H1 (cell line): ENCODE measurements at regions of chr1 and their contacts with region 1.

Region 1: DNA sequence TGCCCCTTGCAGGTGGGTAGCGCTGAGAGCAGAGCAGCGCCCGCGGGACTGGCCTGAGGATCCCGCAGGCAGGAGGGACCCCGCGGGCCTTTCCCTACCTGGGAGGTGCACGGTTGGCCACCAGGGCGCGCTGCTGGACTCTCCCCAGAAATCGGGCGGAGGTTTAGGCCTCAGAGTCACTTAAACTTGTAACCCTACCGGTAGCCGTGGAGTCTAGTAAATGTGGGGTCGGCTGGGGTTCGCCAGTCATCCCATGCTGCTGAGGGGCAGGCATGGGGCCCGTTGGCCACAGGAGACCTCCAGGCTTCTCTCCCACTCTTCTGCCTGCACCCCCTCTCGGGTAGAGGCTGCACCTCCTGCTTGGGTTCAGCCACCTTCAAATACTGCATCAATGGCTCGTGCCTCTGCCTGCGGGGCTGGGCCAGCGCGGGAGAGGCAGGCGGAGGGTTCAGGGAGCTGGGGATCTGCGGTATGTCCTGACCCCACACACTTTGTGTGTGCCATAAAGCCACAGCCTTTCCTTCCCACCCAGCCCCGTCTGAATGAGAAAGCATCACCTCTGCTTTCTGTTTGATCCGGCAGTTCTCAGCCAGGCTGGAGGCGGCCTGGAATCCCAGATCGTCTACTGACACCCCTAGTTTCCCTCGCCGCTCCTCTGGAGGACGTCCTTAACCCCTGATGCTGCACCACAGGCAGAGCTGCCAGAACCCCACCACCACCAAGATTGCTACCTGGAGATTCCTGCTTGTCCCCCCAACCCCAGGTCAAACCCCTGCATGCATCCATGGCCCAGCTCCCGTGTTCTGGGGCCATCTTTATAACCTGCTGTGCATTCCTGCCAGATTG is 12.3 kb upstream of the GSTM4 start:
- DNase-seq: peak; percentile 74 to 99
- H3K4me3 ChIP-seq: no peak overlapping the region
- H3K27ac ChIP-seq: no peak overlapping the region
- H3K4me1 ChIP-seq: no peaks in the 10 kb centered on the region; a peak in 1 of 7 replicates
- H3K27me3 ChIP-seq: no peaks in the 10 kb centered on the region; a peak in 2 of 7 replicates
- CTCF ChIP-seq: peak; percentile 83 to 98 (median 92)
- EP300 ChIP-seq: 0 out of 3 replicates have a peak, but pooled peaks of 1 of the 2 experiments have one; percentile 12
- POLR2A ChIP-seq: no peak
- RAD21 ChIP-seq: peak; percentile 89 to 92

Region 2: DNA sequence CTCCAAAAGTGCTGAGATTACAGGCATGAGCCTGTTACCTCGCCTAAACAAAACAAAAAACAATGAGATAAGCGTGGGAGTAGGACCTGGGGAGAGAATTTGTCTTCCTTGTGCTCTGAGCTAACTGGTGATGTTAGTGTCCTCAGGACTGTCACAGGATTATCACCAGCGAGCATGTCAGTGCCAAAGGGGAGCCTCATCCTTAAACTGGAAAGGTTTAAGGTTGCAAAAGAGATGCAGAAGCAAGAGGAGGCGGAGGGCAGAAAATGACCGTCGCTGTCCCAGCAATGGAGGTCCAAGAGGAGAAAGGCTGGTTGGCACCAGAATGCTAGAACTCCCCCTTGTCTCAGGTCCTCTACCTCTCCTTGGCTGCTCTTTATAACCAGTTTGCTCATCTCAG is 173.4 kb before region 1 on chr1:
- CTCF ChIA-PET with region 1: no interaction called
- POLR2A ChIA-PET with region 1: no interaction called
- DNase-seq: no peak
- H3K4me3 ChIP-seq: no peak overlapping the region
- H3K27ac ChIP-seq: no peak overlapping the region
- H3K4me1 ChIP-seq: peaks cover 0 to 8% (median 1%) of the 10 kb centered on the region in 4 experiments; a peak in 5 of 7 replicates
- H3K27me3 ChIP-seq: peaks cover 3 to 36% (median 29%) of the 10 kb centered on the region in 4 experiments
- CTCF ChIP-seq: no peak
- EP300 ChIP-seq: no peak
- POLR2A ChIP-seq: no peak
- RAD21 ChIP-seq: no peak

Region 3: GRCh38 chr1:109532365-109533136 is 111.1 kb before region 1 on chr1:
- CTCF ChIA-PET with region 1: interaction called, 17 read pairs
- POLR2A ChIA-PET with region 1: no interaction called
- DNase-seq: peak in 1 of 2 experiments; percentile 97
- H3K4me3 ChIP-seq: peak overlapping the region in 2 of 4 experiments; percentile 10 to 40; a peak in 1 of 8 replicates
- H3K27ac ChIP-seq: no peak overlapping the region
- H3K4me1 ChIP-seq: peaks cover 0 to 3% (median 1%) of the 10 kb centered on the region in 4 experiments; a peak in 4 of 7 replicates
- H3K27me3 ChIP-seq: no peaks in the 10 kb centered on the region
- CTCF ChIP-seq: peak; percentile 92 to 98 (median 96)
- EP300 ChIP-seq: no peak
- POLR2A ChIP-seq: no peak
- RAD21 ChIP-seq: peak; percentile 93

Region 4: GRCh38 chr1:109598655-109599054 is 45.0 kb before region 1 on chr1:
- CTCF ChIA-PET with region 1: interaction called, 25 read pairs
- POLR2A ChIA-PET with region 1: no interaction called
- DNase-seq: no peak
- H3K4me3 ChIP-seq: no peak overlapping the region
- H3K27ac ChIP-seq: no peak overlapping the region
- H3K4me1 ChIP-seq: no peaks in the 10 kb centered on the region
- H3K27me3 ChIP-seq: no peaks in the 10 kb centered on the region
- CTCF ChIP-seq: peak; percentile 36 to 64 (median 61)
- EP300 ChIP-seq: no peak
- POLR2A ChIP-seq: no peak
- RAD21 ChIP-seq: peak; percentile 57 to 67

Region 5: GRCh38 chr1:109655601-109656519 is 12.3 kb after region 1 on chr1 and contains the start of gene GSTM4:
- CTCF ChIA-PET with region 1: interaction called, 185 read pairs
- POLR2A ChIA-PET with region 1: interaction called, 6 read pairs
- DNase-seq: peak; percentile 44 to 86
- H3K4me3 ChIP-seq: peak within 1 kb of the TSS; percentile 59 to 74 (median 66)
- H3K27ac ChIP-seq: no peak within 1 kb of the TSS
- H3K4me1 ChIP-seq: 0 out of 7 replicates have a peak, but pooled peaks cover 0 to 3% (median 0%) of the 10 kb centered on the region in 4 experiments
- H3K27me3 ChIP-seq: peaks cover 0 to 5% (median 4%) of the 10 kb centered on the region in 4 experiments; a peak in 6 of 7 replicates
- CTCF ChIP-seq: no peak; a peak in 1 of 4 replicates
- EP300 ChIP-seq: 0 out of 3 replicates have a peak, but pooled peaks of 1 of the 2 experiments have one; percentile 22
- POLR2A ChIP-seq: peak in 1 of 2 experiments; percentile 32; a peak in 1 of 3 replicates
- RAD21 ChIP-seq: no peak; a peak in 1 of 4 replicates
- total RNA-seq, gene GSTM4: 11.3 and 18.7 TPM in 2 replicates

Region 6: DNA sequence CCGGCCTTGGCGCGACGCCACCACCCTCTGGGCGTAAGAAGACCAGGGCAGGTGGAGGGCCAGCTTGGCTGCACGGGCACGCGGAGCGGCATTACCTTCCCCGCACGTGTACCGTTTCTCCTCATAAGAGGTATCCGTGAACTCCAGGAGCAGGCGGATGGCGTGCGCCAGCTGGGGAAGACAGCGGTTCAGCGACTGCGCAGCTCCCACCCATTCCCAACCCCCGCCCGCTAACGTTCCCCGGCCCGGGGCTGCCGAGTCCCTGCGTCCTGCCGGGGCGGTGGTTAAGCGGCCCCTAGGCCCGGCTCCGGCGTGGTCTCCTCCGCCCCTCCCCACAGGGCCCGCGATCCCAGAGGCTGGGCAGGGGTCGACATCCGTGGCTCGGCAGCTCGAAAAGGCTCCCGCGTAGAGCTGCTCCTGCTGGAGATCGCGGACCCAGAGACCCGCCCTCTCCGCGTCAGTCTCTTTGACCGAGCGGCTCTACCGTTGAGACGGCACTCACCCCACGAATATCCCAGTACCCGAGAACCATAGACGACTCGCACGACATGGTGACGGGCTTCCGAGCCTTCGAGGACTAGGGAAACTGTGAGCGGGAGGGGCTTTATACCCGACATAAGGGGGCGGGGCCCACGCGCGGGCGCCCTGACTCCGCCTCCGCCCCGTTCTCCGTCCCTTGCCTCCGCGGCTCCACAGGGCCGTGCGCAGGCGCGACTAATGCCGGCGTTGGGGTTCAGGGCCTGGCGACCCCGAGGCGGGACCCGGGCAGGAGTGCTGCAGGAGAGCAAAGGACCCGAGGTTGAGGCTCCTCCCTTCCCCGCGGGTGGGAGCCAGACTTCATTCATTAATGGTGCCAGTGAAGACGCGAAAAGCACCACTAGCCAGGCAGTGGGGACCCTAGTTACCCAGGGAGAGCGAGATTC is 96.4 kb after region 1 on chr1:
- CTCF ChIA-PET with region 1: interaction called, 18 read pairs
- POLR2A ChIA-PET with region 1: no interaction called
- DNase-seq: peak in 1 of 2 experiments; percentile 89
- H3K4me3 ChIP-seq: peak overlapping the region; percentile 65 to 79 (median 70)
- H3K27ac ChIP-seq: no peak overlapping the region; the same call in 1 of the 2 replicates
- H3K4me1 ChIP-seq: peaks cover 0 to 8% (median 5%) of the 10 kb centered on the region in 4 experiments; a peak in 5 of 7 replicates
- H3K27me3 ChIP-seq: peaks cover 5 to 28% (median 27%) of the 10 kb centered on the region in 4 experiments
- CTCF ChIP-seq: no peak
- EP300 ChIP-seq: 0 out of 3 replicates have a peak, but pooled peaks of 1 of the 2 experiments have one; percentile 14
- POLR2A ChIP-seq: peak; percentile 59 to 62; a peak in 2 of 3 replicates
- RAD21 ChIP-seq: no peak

Region 7: DNA sequence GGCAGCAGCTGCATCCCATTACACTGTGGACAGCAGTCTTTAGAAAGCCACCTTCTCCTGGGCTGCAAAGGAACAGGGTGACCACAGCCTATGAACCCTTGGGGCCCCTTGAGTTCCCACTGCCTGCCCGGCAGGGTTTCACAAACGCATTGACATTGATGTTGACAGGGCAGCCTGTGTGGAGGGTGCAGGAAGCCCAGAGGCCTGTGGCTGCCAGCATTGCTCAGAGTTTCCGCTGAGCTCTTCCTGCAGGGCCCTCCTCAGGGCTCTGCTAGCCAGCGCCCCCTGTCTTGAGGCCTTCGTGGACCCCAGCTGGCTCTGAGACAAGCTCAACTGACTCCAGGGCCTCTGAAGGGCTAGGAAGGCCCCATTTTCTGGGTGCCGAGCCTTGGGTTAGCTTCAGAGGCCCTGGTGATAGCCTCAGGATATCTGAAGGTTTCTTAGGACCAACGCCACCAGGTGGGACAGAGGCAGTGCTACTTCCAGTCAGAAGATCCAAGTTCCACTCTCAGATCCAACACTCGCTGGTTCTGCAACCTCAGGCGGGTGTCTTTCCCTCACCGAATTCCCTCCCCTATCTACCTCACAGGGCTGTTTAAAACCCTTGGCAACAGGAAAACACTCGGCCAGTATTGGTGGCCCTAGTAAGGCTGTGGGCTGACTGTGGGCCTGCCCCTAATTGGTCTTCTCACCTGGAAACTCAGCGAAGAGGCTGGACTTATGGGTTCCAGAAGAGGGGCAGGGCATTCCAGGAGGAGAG is 147.3 kb after region 1 on chr1:
- CTCF ChIA-PET with region 1: interaction called, 14 read pairs
- POLR2A ChIA-PET with region 1: no interaction called
- DNase-seq: no peak
- H3K4me3 ChIP-seq: no peak overlapping the region
- H3K27ac ChIP-seq: no peak overlapping the region
- H3K4me1 ChIP-seq: peaks cover 0 to 18% (median 7%) of the 10 kb centered on the region in 4 experiments; a peak in 6 of 7 replicates
- H3K27me3 ChIP-seq: peaks cover 0 to 3% (median 2%) of the 10 kb centered on the region in 4 experiments; a peak in 2 of 7 replicates
- CTCF ChIP-seq: peak; percentile 31 to 65 (median 54)
- EP300 ChIP-seq: no peak
- POLR2A ChIP-seq: no peak
- RAD21 ChIP-seq: peak; percentile 14 to 50; a peak in 3 of 4 replicates